Activated T-helper 1 cell treated with anti-CD3 and anti-CD28 coated beads, Interleukin-12 subunit alpha, Interleukin-12 subunit beta, Interleukin-2, Interleukin-4 antibody, amounts not matched to agents 30 ng/mL and 10 ng/mL and 1 ng/mL, durations not matched to agents 14 hours and 24 hours and 36 hours (primary cell): ENCODE measurements at regions of chr1 and their contacts with region 1.

Region 1: GRCh38 chr1:9910425-9911178 is 533 bp upstream of the CTNNBIP1 start:
- DNase-seq: peak; percentile 100
- H3K4me3 Mint-ChIP-seq: peak overlapping the region; percentile 92
- H3K27ac Mint-ChIP-seq: peak overlapping the region; percentile 97
- H3K4me1 Mint-ChIP-seq: peaks cover 30% of the 10 kb centered on the region
- H3K27me3 Mint-ChIP-seq: peaks cover 7% of the 10 kb centered on the region

Region 2: GRCh38 chr1:9588551-9589143 is 322.0 kb before region 1 on chr1 and contains the start of gene TMEM201:
- intact Hi-C with region 1: loop called (anchors 2 kb)
- DNase-seq: peak; percentile 94
- H3K4me3 Mint-ChIP-seq: peak within 1 kb of the TSS; percentile 72
- H3K27ac Mint-ChIP-seq: peak within 1 kb of the TSS; percentile 48
- H3K4me1 Mint-ChIP-seq: peaks cover 30% of the 10 kb centered on the region
- H3K27me3 Mint-ChIP-seq: no peaks in the 10 kb centered on the region
- total RNA-seq, gene TMEM201: 36.7 and 38.7 TPM in 2 replicates

Region 3: GRCh38 chr1:9874959-9875635 is 35.5 kb before region 1 on chr1:
- intact Hi-C with region 1: loop called (anchors 2 kb)
- DNase-seq: peak; percentile 60
- H3K4me3 Mint-ChIP-seq: no peak overlapping the region
- H3K27ac Mint-ChIP-seq: no peak overlapping the region
- H3K4me1 Mint-ChIP-seq: peaks cover 7% of the 10 kb centered on the region
- H3K27me3 Mint-ChIP-seq: no peaks in the 10 kb centered on the region

Region 4: GRCh38 chr1:10209905-10210810 is 299.6 kb after region 1 on chr1 and contains the start of gene KIF1B:
- intact Hi-C with region 1: loop called (anchors 1 kb)
- DNase-seq: peak; percentile 97
- H3K4me3 Mint-ChIP-seq: peak within 1 kb of the TSS; percentile 92
- H3K27ac Mint-ChIP-seq: peak within 1 kb of the TSS; percentile 83
- H3K4me1 Mint-ChIP-seq: peaks cover 35% of the 10 kb centered on the region
- H3K27me3 Mint-ChIP-seq: peaks cover 12% of the 10 kb centered on the region
- total RNA-seq, gene KIF1B: 15.8 and 19.0 TPM in 2 replicates

Region 5: GRCh38 chr1:10430216-10431069 is 519.8 kb after region 1 on chr1 and contains the start of gene CENPS:
- intact Hi-C with region 1: loop called (anchors 1 kb)
- DNase-seq: peak; percentile 86
- H3K4me3 Mint-ChIP-seq: peak within 1 kb of the TSS; percentile 92
- H3K27ac Mint-ChIP-seq: peak within 1 kb of the TSS; percentile 92
- H3K4me1 Mint-ChIP-seq: peaks cover 24% of the 10 kb centered on the region
- H3K27me3 Mint-ChIP-seq: no peaks in the 10 kb centered on the region
- total RNA-seq, gene CENPS: 22.1 and 23.4 TPM in 2 replicates

Region 6: GRCh38 chr1:11262171-11263049 is 1351.8 kb after region 1 on chr1 and contains the start of gene MTOR:
- intact Hi-C with region 1: loop called (anchors 2 kb)
- DNase-seq: peak; percentile 97
- H3K4me3 Mint-ChIP-seq: peak within 1 kb of the TSS; percentile 97
- H3K27ac Mint-ChIP-seq: peak within 1 kb of the TSS; percentile 82
- H3K4me1 Mint-ChIP-seq: peaks cover 11% of the 10 kb centered on the region
- H3K27me3 Mint-ChIP-seq: peaks cover 3% of the 10 kb centered on the region
- total RNA-seq, gene MTOR: 48.7 and 49.4 TPM in 2 replicates